HEK293 (cell line): ENCODE measurements at regions of chr10 and their contacts with region 1.

Region 1: GRCh38 chr10:47402641-47403301 is 18.7 kb upstream of the ZNF488 start:
- H3K4me3 ChIP-seq: no peak overlapping the region
- H3K27ac ChIP-seq: no peak overlapping the region
- H3K4me1 ChIP-seq: no peaks in the 10 kb centered on the region
- CTCF ChIP-seq: no peak

Region 2: DNA sequence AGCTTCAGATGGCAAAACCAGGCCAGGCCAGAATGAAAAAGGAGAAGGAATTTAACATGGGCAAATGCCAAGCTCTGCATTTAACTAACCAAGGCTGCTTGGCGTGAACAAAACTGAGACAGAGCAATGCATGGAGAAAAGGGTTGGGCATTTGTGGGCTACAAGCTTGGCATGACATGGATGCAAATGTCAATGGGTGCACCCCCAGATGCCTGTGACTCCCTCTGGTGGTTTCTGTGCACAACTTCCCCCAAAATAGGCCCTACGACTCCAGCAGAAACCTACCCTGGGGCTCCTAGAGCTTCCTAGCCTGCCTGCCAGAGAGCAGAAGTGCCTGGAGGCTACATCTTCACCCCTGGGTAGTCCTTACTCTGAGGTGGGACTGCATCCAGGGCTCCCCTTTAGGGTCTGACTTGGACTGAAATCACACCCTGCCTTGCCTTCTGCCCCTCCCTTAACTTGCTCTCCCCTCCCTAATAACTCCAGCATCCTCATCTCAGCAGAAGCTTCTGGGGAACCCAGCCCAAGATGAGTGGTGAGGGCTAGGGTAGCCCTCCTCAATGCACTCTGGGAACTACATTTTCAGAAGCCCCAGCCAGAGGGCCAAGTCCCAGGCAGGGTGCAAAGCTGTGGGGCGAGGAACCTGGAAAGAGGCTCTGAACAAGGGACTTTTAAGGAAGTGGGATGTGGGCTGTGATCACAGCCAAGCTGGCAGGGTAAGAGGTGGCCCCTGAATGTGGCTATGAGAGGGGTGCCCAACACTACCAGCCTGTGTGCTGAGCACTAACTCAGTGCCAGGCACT is 857.6 kb before region 1 on chr10:
- CTCF ChIA-PET with region 1: no interaction called
- POLR2A ChIA-PET with region 1: no interaction called
- H3K4me3 ChIP-seq: no peak overlapping the region
- H3K27ac ChIP-seq: no peak overlapping the region
- H3K4me1 ChIP-seq: no peaks in the 10 kb centered on the region
- CTCF ChIP-seq: peak; percentile 46; the same call in 1 of the 2 replicates

Region 3: GRCh38 chr10:47384148-47384921 is 18.4 kb before region 1 on chr10 and contains the start of gene ZNF488:
- CTCF ChIA-PET with region 1: no interaction called
- POLR2A ChIA-PET with region 1: interaction called, 14 read pairs
- H3K4me3 ChIP-seq: peak within 1 kb of the TSS; percentile 63
- H3K27ac ChIP-seq: peak within 1 kb of the TSS; percentile 37; the same call in 1 of the 2 replicates
- H3K4me1 ChIP-seq: no peaks in the 10 kb centered on the region
- CTCF ChIP-seq: peak; percentile 53; the same call in 1 of the 2 replicates